ENCODE measurements at regions of chr18 and their contacts with region 1.

Region 1: GRCh38 chr18:12308386-12309100 is 502 bp downstream of the TUBB6 start:
- DNase-seq: peak; percentile 82
- H3K4me3 ChIP-seq: peak overlapping the region; percentile 43 to 84 (median 77)
- H3K27ac ChIP-seq: peak overlapping the region; percentile 90
- H3K4me1 ChIP-seq: peaks cover 31% of the 10 kb centered on the region
- H3K27me3 ChIP-seq: no peaks in the 10 kb centered on the region
- CTCF ChIP-seq: no peak
- POLR2A ChIP-seq: peak; percentile 29

Region 2: DNA sequence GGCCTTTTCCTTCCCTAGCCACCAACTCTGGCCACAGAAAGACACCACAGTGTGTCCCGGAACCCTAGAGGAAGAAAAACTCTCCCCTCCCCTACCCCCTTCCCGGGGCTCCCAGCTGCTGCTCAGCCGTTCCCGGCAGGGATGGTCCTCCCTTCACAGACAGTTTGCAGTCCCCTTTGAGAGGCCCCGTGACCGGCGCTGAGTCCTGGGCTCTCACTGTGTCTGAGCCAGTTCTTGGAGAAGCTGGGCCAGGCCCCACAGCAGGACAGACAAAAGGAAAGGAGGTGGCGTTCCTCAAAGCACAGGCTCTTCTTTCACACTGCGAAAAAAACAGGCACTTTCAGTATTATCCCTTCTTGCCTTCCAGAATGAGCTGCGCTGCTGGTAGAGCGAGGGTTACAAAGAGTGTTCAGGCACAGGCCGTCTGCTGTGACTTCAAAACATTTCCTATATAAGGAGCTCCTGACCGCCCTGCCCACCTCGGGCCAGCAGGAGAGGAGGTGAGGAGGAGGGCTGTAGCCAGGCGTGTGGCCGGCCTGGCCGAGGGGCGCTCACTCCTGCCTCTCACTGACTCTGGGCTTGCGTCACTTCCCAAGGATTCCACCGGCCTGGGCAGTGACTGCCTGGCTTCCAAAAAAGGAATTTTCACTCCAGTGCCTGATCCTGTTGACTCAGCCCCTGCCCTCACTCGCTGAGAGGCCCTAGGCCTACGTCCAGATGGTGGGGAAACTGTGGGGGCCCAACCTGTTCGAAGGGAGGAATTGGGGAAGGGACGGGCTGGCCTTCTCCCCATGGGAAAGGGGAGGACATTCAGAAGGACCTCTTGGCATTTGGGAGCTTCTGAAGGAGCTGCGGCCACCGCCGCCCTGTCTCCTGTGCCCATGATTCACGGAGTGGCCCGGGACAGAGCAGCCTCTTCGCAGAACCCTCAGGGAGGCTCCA is 29.5 kb before region 1 on chr18:
- CTCF ChIA-PET with region 1: interaction called, 61 read pairs
- POLR2A ChIA-PET with region 1: interaction called, 46 read pairs
- dilution Hi-C with region 1: no loop called
- intact Hi-C with region 1: loop called (anchors 1 kb)
- DNase-seq: peak; percentile 93
- H3K4me3 ChIP-seq: peak overlapping the region; percentile 9 to 44 (median 30)
- H3K27ac ChIP-seq: peak overlapping the region; percentile 89
- H3K4me1 ChIP-seq: peaks cover 34% of the 10 kb centered on the region
- H3K27me3 ChIP-seq: no peaks in the 10 kb centered on the region
- CTCF ChIP-seq: peak in 1 of 2 donors; percentile 23
- POLR2A ChIP-seq: peak; percentile 86

Region 3: DNA sequence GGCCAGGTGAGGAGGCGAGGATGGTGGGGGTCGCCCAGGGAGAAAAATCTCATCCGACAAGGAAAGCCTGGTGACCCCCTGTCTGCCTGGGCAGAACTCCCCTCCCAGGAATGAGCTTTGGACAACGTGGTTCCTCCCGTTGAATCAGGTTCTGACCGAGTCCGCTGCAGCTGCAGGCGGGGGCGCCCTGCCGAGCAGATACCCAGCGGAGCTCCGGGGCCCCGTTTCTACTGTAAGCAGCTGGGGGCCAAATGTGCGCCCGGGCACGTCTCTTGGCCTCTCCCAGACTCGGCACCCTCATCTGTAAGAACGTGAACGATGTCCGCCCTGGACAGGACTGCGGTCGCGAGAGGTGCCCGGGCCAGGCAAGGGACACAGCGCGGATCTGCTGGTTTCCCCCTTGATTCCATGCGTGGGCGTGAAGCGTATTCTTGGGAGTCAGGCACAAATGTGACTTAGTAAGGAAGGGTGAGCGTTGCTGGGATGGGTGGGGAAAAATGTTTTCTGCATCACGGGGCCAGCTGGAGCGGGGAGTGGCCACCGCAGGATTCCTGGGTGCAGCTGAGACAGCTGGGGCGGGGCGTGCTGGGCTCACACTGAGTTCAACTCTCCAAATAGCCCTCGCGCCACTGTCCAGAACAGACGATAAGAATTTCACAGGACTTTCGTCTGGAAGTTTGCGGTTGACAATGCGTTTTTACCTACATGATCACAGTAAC is 20.7 kb before region 1 on chr18:
- CTCF ChIA-PET with region 1: interaction called, 61 read pairs
- POLR2A ChIA-PET with region 1: interaction called, 11 read pairs
- dilution Hi-C with region 1: no loop called
- intact Hi-C with region 1: no loop called
- DNase-seq: peak; percentile 23
- H3K4me3 ChIP-seq: peak overlapping the region in 2 of 3 experiments; percentile 25 to 47
- H3K27ac ChIP-seq: no peak overlapping the region
- H3K4me1 ChIP-seq: no peaks in the 10 kb centered on the region
- H3K27me3 ChIP-seq: peaks cover 0 to 2% of the 10 kb centered on the region in 2 experiments
- CTCF ChIP-seq: no peak
- POLR2A ChIP-seq: no peak

Region 4: DNA sequence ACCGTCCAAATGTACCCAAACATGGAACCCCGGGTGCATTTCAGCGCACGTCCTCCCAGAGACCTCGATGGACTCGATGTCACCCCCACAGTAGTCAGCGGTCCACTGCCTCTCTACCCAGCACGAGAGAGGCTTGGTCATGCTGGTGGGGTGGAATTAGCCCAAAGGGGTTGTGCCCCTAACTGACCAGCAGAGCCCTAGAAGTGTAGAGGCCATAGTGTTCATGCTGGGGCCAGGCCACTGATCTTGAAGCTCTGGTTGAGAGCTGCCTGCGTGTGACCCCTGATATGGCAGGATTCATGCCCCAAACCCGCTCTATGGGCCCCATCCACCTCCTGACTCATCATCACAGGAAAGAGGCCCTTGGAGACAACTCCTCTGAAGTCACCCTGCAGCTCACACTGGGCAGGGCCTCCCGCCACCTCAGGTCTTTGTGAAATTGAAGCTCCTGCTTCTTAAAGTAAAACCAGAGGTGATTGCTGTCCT is 12.6 kb before region 1 on chr18:
- CTCF ChIA-PET with region 1: interaction called, 22 read pairs
- POLR2A ChIA-PET with region 1: interaction called, 17 read pairs
- dilution Hi-C with region 1: no loop called
- intact Hi-C with region 1: loop called (anchors 1 kb)
- DNase-seq: no peak
- H3K4me3 ChIP-seq: no peak overlapping the region
- H3K27ac ChIP-seq: peak overlapping the region; percentile 85
- H3K4me1 ChIP-seq: peaks cover 14% of the 10 kb centered on the region
- H3K27me3 ChIP-seq: no peaks in the 10 kb centered on the region
- CTCF ChIP-seq: no peak
- POLR2A ChIP-seq: peak; percentile 42

Region 5: DNA sequence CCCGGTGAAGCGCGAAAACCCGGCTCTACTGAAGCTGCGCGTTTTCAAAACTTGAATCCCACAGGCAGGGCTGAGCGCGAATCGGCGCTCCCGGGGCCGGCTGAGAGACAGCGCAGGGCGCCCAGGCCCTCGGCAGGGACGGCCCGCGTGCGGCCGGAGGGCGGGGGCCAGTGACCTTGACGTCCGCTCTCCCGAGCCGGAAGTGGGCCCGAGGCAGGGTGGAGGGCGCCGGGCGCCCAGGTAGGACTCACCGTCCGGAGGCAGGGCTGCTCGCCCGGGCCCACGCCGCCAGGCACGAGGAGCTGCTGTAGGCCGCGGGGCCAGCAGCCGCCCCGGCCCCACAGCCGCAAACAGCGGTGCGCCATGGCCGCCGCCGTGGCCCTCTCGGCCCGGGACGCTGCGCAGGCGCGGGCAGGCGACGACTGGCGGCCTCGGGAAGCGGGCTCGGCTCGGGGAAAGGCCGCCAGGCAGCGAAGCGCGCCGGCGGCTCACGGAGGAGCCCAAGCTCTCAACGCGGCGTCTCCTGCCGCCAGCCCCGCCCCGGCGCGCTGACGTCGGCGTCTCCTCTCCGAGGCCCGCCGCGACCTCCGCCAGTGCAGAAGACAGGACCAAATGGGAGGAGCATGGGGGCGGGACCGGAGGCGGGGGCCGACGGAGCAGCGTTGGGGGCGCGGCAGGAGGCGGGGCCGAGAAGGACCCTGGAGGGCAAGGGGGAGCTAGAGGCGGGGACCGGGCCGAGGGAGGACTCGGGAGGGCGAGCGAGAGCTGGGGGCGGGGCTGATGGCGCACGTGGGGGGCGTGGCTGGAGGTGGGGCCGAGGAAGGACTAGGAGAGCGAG is 68.4 kb after region 1 on chr18 and contains the start of gene AFG3L2:
- CTCF ChIA-PET with region 1: interaction called, 4 read pairs
- POLR2A ChIA-PET with region 1: interaction called, 7 read pairs
- dilution Hi-C with region 1: no loop called
- intact Hi-C with region 1: loop called (anchors 1 kb)
- DNase-seq: peak; percentile 100
- H3K4me3 ChIP-seq: peak within 1 kb of the TSS; percentile 62 to 85 (median 72)
- H3K27ac ChIP-seq: peak within 1 kb of the TSS; percentile 89
- H3K4me1 ChIP-seq: peaks cover 9% of the 10 kb centered on the region
- H3K27me3 ChIP-seq: no peaks in the 10 kb centered on the region
- CTCF ChIP-seq: no peak
- POLR2A ChIP-seq: peak; percentile 93
- total RNA-seq, gene AFG3L2: 40.6 and 42.4 TPM in 2 replicates

Measured in endothelial cell of umbilical vein (primary cell).